Astrocyte of the cerebellum (primary cell): ENCODE measurements at regions of chr15 and their contacts with region 1.

Region 1: DNA sequence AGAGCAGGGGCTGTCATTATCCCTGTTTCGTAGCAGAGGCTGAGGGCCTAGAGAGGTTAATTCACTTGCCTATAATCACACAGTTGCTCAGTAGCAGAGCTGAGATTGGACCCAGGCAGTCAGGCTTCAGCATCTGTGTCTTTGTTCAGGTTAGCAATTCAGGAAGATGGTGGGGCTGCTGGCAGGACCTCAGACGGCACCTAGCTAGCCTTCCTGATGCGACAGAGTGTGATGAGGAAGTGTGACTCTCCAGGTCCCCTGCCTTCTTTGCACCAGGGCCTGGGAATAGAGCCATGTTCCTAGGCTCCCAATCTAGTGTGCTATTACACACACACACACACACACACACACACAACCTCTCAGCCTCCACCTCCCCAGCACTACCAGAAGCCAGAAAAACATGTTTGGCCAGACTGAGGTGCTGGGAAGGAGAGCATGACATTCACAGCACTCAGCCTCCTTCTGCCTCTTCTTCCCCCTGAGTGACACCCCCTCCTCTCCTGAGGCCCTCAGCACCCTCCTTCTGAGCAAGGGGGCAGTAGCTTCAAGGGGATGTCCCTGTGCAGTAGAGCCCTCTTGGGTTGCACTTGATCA is 88.9 kb downstream of the TLE3 start:
- DNase-seq: no peak
- H3K4me3 ChIP-seq: no peak overlapping the region
- CTCF ChIP-seq: no peak

Region 2: GRCh38 chr15:69958494-69959084 is 50.2 kb before region 1 on chr15:
- in situ Hi-C with region 1: loop called (anchors 5 kb)
- DNase-seq: no peak
- H3K4me3 ChIP-seq: no peak overlapping the region
- CTCF ChIP-seq: no peak

Region 3: GRCh38 chr15:70045045-70045444 is 36.3 kb after region 1 on chr15:
- in situ Hi-C with region 1: no loop called
- DNase-seq: no peak
- H3K4me3 ChIP-seq: no peak overlapping the region
- CTCF ChIP-seq: no peak

Region 4: DNA sequence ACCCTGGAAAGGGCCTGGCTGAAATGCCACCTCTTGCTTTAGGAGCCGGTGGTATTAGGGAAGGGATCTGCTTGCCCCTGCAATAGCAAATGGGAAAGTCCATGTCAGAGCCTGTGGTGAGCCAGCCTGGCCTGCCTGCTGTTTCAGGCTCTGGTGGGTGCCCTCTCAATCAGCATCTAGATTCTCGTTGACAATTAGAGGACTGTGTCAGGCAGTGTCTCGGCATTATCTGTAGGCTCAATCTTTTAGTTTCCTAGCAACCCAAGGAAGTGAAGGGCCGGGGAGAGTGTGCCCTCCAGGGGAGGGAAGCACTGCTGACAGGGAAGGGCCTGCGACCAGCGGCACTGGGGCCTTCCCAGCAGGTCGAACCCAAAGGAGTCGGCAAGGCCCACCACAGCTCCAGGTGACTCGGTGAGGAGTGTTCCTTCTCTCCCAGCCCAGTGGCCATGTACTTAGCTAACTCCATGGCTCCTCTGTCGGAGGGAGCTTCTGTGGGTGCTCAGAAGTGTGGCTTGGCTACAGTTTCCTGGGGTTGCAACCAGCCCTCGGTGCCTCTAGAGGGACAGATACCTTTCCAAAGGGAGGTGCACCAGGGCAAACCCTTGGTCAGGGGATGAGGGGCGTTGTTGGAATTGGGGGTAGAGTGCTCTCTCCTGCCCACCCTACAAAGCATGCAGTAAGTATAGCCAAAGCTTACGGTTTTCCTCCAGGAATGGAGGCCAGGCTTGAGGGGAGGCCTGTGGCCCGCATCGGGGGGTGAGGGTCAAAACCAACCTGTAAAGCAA is 47.0 kb after region 1 on chr15:
- in situ Hi-C with region 1: loop called (anchors 5 kb)
- DNase-seq: no peak
- H3K4me3 ChIP-seq: no peak overlapping the region
- CTCF ChIP-seq: no peak